ENCODE measurements at regions of chrX and their contacts with region 1.

Region 1: DNA sequence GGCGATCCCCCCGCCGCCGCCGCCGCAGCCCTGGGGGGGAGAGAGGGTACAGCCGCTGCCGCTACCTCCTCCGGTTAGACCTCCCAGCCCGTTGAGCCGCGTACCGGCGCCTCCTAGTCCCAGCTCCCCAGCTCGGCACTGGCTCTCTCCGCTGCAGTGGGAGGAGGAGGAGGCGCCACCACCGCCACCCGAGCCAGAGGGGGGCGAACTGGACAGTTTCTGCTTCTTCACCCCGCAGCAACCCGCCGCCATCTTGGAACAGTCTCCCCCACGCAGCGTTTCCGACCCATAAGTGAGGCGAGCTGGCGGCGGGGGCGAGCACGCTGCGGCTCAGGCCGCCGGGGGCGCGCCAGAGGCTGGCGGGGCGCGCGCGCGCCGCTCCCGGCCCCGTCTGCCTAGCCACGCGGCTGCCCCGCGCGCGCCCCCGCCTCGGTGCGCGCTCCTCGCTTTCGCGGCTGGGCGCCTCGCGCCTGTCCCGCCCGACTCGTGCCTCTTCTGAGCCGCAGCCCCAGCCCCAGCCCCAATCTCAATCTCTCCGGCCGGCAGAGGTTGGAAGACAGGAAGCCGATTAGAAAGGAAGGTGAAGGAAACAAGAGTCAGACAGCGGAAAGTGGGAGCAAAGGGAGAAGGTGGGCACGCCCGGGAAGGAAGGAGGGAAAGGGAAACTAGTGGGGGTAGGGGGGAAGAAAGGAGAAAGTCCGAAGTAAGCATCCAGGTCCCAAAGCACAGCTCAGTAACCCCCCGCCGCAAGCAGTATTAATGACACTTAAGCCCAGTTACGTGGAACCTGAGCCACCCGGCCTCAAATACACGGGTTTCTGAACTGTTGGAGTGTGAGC is at the start of gene AMMECR1:
- DNase-seq: peak; percentile 72 to 83
- H3K4me3 ChIP-seq: peak within 1 kb of the TSS; percentile 49
- H3K4me3 Mint-ChIP-seq: peak within 1 kb of the TSS; percentile 99
- H3K27ac Mint-ChIP-seq: peak within 1 kb of the TSS; percentile 95
- H3K4me1 ChIP-seq: peaks cover 15% of the 10 kb centered on the region; the same call in 1 of the 2 replicates
- H3K4me1 Mint-ChIP-seq: peaks cover 1% of the 10 kb centered on the region
- H3K27me3 ChIP-seq: no peaks in the 10 kb centered on the region
- H3K27me3 Mint-ChIP-seq: no peaks in the 10 kb centered on the region
- CTCF ChIP-seq: no peak
- total RNA-seq, gene AMMECR1: 21.4 and 23.0 TPM in 2 replicates

Region 2: DNA sequence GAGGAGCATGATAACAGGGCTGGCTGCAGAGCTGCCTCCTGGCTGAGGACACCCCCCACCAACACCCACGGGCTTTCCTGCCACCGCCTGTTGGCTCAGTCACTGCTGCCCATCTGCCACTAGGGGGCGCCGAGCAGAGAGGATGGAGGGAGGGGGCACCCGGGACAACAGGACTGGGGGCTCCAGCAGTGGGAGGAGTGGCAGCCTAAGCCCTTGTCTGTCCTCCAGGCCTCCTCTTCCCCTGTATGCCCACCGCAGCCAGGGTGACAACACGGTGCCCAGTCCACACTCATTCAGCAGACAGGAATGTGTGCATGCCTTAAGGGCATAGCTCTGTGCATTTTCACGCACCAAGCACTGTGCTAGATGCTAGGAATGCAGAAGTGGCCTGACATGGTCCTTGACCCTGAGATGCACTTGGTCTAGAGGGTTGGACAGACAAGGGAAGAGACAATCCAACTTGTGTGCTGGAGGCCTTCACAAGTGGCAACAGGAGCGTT is 150.0 kb before region 1 on chrX:
- CTCF ChIA-PET with region 1: interaction called, 4 read pairs
- POLR2A ChIA-PET with region 1: no interaction called
- intact Hi-C with region 1: loop called (anchors 10 kb)
- DNase-seq: peak in 1 of 2 experiments; percentile 14
- H3K4me3 ChIP-seq: no peak overlapping the region
- H3K4me3 Mint-ChIP-seq: no peak overlapping the region
- H3K27ac Mint-ChIP-seq: no peak overlapping the region
- H3K4me1 ChIP-seq: no peaks in the 10 kb centered on the region
- H3K4me1 Mint-ChIP-seq: no peaks in the 10 kb centered on the region
- H3K27me3 ChIP-seq: no peaks in the 10 kb centered on the region
- H3K27me3 Mint-ChIP-seq: no peaks in the 10 kb centered on the region
- CTCF ChIP-seq: peak; percentile 37 to 39

Region 3: DNA sequence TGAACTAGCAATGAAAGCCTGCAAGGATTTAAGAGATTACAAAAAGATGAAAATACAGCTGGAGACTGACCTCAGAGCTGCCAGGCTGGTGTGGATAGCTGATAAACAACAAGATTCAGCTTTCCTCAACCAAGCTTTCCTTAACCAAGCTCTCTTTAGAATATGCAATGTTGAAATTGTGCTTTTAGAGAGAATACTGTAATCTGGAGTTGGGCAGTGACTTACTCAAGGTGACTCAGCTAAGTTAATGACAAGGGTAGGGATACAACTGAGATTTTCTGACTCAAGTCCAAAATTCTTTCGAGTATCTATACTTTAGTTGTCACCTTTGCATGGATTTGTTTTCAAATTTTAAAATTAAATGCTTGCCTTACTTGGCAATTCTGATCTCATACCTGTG is 98.1 kb before region 1 on chrX:
- CTCF ChIA-PET with region 1: no interaction called
- POLR2A ChIA-PET with region 1: no interaction called
- intact Hi-C with region 1: loop called (anchors 5 kb)
- DNase-seq: no peak
- H3K4me3 ChIP-seq: no peak overlapping the region
- H3K4me3 Mint-ChIP-seq: no peak overlapping the region
- H3K27ac Mint-ChIP-seq: no peak overlapping the region
- H3K4me1 ChIP-seq: peaks cover 13% of the 10 kb centered on the region
- H3K4me1 Mint-ChIP-seq: no peaks in the 10 kb centered on the region
- H3K27me3 ChIP-seq: no peaks in the 10 kb centered on the region
- H3K27me3 Mint-ChIP-seq: no peaks in the 10 kb centered on the region
- CTCF ChIP-seq: no peak

Region 4: DNA sequence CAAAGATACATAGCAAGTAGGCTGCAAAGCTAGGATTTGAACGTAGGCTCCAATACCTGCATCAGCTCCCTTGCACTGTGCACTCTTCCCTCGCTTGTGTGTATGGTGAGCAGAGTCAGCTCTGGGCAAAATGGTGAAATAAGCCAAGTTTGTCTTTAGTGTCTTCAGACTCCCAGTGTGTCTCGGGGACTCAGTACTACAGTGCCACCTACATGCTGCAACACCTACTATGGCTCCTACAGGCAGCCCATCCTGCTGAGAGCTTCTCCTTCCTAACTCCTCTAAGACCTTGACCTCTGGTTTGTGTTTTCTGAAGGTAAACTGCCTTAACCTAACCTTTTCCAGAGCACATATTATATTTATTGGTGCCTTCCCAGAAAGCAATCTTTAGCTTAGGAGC is 83.1 kb after region 1 on chrX:
- CTCF ChIA-PET with region 1: no interaction called
- POLR2A ChIA-PET with region 1: interaction called, 4 read pairs
- intact Hi-C with region 1: loop called (anchors 2 kb)
- DNase-seq: no peak
- H3K4me3 ChIP-seq: no peak overlapping the region
- H3K4me3 Mint-ChIP-seq: no peak overlapping the region
- H3K27ac Mint-ChIP-seq: no peak overlapping the region
- H3K4me1 ChIP-seq: peaks cover 12% of the 10 kb centered on the region; the same call in 1 of the 2 replicates
- H3K4me1 Mint-ChIP-seq: peaks cover 22% of the 10 kb centered on the region
- H3K27me3 ChIP-seq: no peaks in the 10 kb centered on the region
- H3K27me3 Mint-ChIP-seq: no peaks in the 10 kb centered on the region
- CTCF ChIP-seq: peak in 1 of 2 experiments; percentile 7

Measured in Caco-2 (cell line).